ENCODE measurements at regions of chr3 and their contacts with region 1.

Region 1: DNA sequence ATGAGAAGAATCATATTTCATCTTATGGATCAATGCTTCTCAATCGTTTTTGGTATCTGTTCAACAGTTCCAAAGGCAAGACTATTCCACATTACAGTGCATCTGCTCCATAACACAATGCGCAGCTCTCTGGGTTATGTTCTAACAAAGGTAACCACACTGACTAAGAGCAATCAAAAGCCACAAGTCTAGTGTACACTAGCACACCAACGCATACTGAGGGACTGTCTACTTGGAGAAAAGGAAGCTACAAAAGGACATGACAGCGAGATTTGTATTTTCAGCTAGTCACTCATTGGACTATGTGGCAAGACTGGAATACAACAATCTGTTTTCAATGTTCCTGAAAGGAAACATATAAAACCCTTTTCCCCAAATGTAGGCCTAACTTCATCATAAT is 35.8 kb downstream of the SETD2 start:
- DNase-seq: no peak
- ATAC-seq: no peak; the same call in 1 of the 2 replicates
- H3K4me3 ChIP-seq: no peak overlapping the region
- H3K27ac ChIP-seq: no peak overlapping the region
- H3K4me1 ChIP-seq: no peaks in the 10 kb centered on the region
- H3K27me3 ChIP-seq: no peaks in the 10 kb centered on the region
- CTCF ChIP-seq: no peak

Region 2: GRCh38 chr3:47065681-47066080 is 62.5 kb before region 1 on chr3:
- CTCF ChIA-PET with region 1: no interaction called
- POLR2A ChIA-PET with region 1: interaction called, 13 read pairs
- intact Hi-C with region 1: no loop called
- DNase-seq: no peak
- ATAC-seq: no peak
- H3K4me3 ChIP-seq: no peak overlapping the region
- H3K27ac ChIP-seq: no peak overlapping the region
- H3K4me1 ChIP-seq: no peaks in the 10 kb centered on the region
- H3K27me3 ChIP-seq: no peaks in the 10 kb centered on the region
- CTCF ChIP-seq: no peak

Measured in PC-3 (cell line).